ENCODE measurements at regions of chr16 and their contacts with region 1.

Region 1: DNA sequence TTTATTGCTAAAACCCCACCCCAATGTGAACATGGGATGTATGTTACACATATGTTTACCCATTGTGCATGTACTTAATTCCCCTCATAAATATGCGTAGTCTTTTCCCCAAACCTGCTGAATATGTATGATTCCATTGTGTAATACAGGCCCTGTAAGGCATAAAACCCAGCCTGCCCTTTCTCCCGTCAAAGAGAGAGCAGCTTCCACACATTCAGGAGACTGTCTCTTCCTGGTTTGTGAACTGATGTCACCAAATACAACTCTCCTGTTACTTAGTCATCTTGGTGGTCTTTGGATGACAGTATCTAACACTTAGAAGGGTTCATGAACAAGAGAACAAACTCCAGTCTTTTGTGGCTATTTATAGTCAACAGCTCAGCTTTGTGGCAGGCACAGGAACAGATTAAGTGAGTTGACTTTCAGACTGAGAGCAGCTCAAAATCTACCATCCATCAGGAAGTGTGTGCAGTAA is 24.7 kb upstream of the TMC7 start:
- DNase-seq: no peak
- ATAC-seq: peak; percentile 51

Region 2: DNA sequence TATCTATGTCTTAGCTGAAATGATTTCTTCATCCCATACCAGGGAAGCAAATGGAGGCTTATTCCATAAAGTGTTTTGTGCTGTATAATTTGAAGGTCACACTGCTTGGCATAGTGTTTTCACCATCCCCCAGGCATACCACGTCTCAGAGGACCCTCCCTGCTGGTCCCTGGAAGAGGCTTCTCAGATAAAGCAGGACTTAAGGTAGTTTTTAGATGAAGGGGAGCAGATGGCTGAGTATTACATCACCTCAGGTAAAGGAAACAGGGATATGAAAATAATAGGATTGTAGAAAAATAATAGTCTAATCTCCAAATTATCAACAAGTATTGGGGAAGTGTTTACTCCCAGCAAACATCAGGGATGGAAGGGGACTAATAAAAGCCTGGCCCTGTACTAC is 25.6 kb before region 1 on chr16:
- intact Hi-C with region 1: loop called (anchors 1 kb)
- DNase-seq: no peak
- ATAC-seq: no peak

Region 3: DNA sequence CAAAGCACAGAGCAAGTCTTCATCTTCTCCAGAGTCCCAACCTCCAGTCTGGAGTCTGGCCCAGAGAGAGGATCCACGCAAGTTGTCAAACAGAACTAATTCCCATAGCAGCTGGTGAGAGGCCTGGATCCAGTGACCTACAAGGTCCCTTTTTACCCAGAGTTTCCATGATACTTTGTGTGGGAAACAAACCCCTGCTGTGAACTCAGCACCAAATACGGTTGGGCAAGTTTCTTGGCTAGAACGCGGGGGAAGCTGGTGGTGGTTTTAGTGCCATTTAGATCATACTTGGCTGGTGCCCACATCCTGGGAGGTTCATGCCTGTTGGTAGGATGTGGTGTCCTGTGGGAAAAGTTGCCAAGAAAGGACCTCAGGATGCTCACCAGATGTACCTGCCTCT is 42.7 kb after region 1 on chr16:
- intact Hi-C with region 1: no loop called
- DNase-seq: no peak
- ATAC-seq: no peak

Region 4: GRCh38 chr16:19044769-19045168 is 85.7 kb after region 1 on chr16:
- intact Hi-C with region 1: no loop called
- DNase-seq: no peak
- ATAC-seq: no peak